Activated T-helper 2 cell treated with anti-CD3 and anti-CD28 coated beads, Interferon-gamma antibody, Interleukin-2, Interleukin-4, amounts not matched to agents 10 μg/mL and 5 μg/mL and 100 μg/mL, durations not matched to agents 14 hours and 24 hours and 36 hours (primary cell): ENCODE measurements at regions of chrX and their contacts with region 1.

Region 1: GRCh38 chrX:153971450-153972367 is at the start of gene HCFC1:
- DNase-seq: peak; percentile 87
- H3K4me3 Mint-ChIP-seq: peak within 1 kb of the TSS; percentile 100
- H3K27ac Mint-ChIP-seq: peak within 1 kb of the TSS; percentile 100
- H3K4me1 Mint-ChIP-seq: peaks cover 33% of the 10 kb centered on the region
- H3K27me3 Mint-ChIP-seq: no peaks in the 10 kb centered on the region
- total RNA-seq, gene HCFC1: 107 and 108 TPM in 2 replicates

Region 2: GRCh38 chrX:153623310-153624029 is 348.2 kb before region 1 on chrX:
- intact Hi-C with region 1: no loop called
- DNase-seq: no peak
- H3K4me3 Mint-ChIP-seq: no peak overlapping the region
- H3K27ac Mint-ChIP-seq: no peak overlapping the region
- H3K4me1 Mint-ChIP-seq: no peaks in the 10 kb centered on the region
- H3K27me3 Mint-ChIP-seq: peaks cover 2% of the 10 kb centered on the region

Region 3: DNA sequence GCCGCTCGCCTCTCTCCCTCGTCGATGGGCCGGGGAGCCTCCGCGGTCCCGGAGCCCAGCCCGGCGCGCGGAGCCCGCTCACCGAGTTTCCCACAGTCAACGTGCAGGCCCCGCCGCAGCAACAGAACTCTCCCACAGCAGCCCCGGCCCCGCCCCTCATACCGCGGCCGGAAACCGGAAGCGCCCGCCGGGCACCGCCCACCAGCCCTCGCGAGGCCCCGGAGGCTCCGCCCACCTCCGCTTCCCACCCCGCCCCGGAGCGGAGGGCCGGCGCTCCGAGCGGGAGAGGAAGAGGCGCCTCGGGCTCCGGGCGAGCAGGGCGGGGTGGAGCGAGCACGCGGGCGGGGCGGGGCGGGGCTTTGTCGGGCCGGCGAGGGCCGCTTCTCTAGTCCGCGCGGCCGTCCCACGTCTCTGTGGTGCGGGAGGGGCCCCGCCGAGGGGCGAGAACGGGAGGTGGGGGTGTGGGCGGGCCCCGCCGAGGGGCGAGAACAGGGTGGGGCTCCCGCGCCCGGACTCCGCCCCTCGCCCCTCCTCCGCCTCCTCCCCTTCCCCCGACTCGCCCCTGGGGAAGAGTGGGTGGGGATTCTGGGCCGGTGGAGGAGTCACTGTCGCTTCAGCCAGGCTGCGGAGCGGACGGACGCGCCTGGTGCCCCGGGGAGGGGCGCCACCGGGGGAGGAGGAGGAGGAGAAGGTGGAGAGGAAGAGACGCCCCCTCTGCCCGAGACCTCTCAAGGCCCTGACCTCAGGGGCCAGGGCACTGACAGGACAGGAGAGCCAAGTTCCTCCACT is 247.3 kb before region 1 on chrX and contains the starts of genes ABCD1 and BCAP31:
- intact Hi-C with region 1: loop called (anchors 1 kb)
- DNase-seq: peak; percentile 85
- H3K4me3 Mint-ChIP-seq: peak within 1 kb of the TSS; percentile 89
- H3K27ac Mint-ChIP-seq: peak within 1 kb of the TSS; percentile 79
- H3K4me1 Mint-ChIP-seq: peaks cover 16% of the 10 kb centered on the region
- H3K27me3 Mint-ChIP-seq: no peaks in the 10 kb centered on the region
- total RNA-seq, gene ABCD1: 8.8 and 10.1 TPM in 2 replicates
- total RNA-seq, gene BCAP31: 154 TPM in 2 replicates

Region 4: DNA sequence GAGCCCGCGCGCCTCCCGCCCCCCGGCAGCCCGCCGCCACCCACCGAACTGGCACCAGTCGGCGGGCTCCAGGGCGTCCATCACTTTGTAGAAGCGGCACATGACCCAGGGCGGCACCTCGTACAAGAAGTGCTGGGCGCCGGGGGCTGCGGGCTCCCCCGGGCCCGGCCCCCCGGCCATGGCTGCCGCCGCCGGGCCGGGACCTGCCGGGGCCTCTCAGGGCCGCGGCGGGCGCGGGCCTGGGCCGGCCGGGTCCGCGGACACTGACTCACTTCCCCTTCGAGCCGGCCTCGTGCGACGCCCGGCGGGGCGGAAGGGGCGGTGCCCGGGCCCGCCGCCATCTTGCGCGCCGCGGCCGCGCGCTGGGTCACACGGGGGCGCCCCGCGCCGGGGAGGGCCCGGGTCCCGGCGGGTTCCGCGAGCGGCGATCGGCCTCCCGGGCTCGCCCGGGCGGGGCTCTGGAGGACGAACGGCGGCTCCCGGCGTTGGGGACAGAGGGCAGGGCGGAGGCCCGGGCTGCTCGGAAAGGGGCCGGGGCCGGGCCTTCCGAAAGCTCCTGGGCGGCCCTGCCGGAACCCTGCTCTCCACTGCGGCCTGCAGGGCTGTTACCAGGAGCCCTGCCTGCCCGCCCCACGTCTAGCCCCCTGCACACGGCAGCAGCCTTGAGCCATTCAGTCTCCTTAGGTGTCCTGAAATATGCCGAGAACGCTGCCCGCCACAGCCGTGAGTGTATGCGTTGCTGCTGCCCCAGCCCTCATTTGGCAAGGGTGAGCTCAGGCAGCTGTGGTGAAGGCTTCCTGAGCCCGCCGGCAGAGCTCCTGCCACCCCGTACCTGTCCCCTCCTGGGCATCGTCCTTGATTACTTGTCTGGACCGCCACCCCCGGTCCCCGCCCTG is 48.2 kb after region 1 on chrX and contains the start of gene IRAK1:
- intact Hi-C with region 1: loop called (anchors 5 kb)
- DNase-seq: peak; percentile 49
- H3K4me3 Mint-ChIP-seq: peak within 1 kb of the TSS; percentile 88
- H3K27ac Mint-ChIP-seq: peak within 1 kb of the TSS; percentile 92
- H3K4me1 Mint-ChIP-seq: peaks cover 9% of the 10 kb centered on the region
- H3K27me3 Mint-ChIP-seq: no peaks in the 10 kb centered on the region
- total RNA-seq, gene IRAK1: 150 and 151 TPM in 2 replicates

Region 5: DNA sequence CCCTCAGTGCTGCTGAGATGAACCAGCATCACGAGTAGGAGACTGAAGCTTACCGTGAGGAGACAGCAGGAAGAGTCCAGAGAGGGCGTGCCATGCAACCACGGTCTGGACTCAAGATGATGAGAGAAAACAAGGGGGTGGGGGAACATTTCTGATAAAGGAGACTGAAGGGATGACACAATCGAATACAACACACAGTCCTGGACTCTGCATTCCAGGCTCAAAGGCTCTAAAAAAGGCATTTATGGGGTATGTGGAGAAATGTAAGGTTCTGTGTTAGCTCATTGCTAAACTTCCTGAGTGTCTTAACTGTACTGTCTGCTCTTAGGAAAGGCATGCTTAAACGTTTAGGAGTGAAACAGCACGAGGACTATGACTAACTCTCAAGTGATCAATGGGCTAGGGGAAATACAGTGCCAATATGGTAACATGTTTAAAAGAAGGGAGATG is 68.6 kb after region 1 on chrX:
- intact Hi-C with region 1: no loop called
- DNase-seq: no peak
- H3K4me3 Mint-ChIP-seq: no peak overlapping the region
- H3K27ac Mint-ChIP-seq: peak overlapping the region; percentile 51
- H3K4me1 Mint-ChIP-seq: peaks cover 16% of the 10 kb centered on the region
- H3K27me3 Mint-ChIP-seq: no peaks in the 10 kb centered on the region

Region 6: GRCh38 chrX:154097597-154098541 is 126.2 kb after region 1 on chrX and contains the start of gene MECP2:
- intact Hi-C with region 1: loop called (anchors 5 kb)
- DNase-seq: peak; percentile 85
- H3K4me3 Mint-ChIP-seq: peak within 1 kb of the TSS; percentile 99
- H3K27ac Mint-ChIP-seq: peak within 1 kb of the TSS; percentile 100
- H3K4me1 Mint-ChIP-seq: peaks cover 55% of the 10 kb centered on the region
- H3K27me3 Mint-ChIP-seq: peaks cover 4% of the 10 kb centered on the region
- total RNA-seq, gene MECP2: 58.2 and 58.4 TPM in 2 replicates

Region 7: GRCh38 chrX:154378782-154379591 is 407.3 kb after region 1 on chrX and contains the start of gene EMD:
- intact Hi-C with region 1: loop called (anchors 5 kb)
- DNase-seq: peak; percentile 96
- H3K4me3 Mint-ChIP-seq: peak within 1 kb of the TSS; percentile 87
- H3K27ac Mint-ChIP-seq: peak within 1 kb of the TSS; percentile 88
- H3K4me1 Mint-ChIP-seq: peaks cover 9% of the 10 kb centered on the region
- H3K27me3 Mint-ChIP-seq: no peaks in the 10 kb centered on the region
- total RNA-seq, gene EMD: 95.6 and 98.8 TPM in 2 replicates